Activated CD8-positive, alpha-beta T cell treated with anti-CD3 and anti-CD28 coated beads for 36 hours (primary cell): ENCODE measurements at regions of chr17 and their contacts with region 1.

Region 1: DNA sequence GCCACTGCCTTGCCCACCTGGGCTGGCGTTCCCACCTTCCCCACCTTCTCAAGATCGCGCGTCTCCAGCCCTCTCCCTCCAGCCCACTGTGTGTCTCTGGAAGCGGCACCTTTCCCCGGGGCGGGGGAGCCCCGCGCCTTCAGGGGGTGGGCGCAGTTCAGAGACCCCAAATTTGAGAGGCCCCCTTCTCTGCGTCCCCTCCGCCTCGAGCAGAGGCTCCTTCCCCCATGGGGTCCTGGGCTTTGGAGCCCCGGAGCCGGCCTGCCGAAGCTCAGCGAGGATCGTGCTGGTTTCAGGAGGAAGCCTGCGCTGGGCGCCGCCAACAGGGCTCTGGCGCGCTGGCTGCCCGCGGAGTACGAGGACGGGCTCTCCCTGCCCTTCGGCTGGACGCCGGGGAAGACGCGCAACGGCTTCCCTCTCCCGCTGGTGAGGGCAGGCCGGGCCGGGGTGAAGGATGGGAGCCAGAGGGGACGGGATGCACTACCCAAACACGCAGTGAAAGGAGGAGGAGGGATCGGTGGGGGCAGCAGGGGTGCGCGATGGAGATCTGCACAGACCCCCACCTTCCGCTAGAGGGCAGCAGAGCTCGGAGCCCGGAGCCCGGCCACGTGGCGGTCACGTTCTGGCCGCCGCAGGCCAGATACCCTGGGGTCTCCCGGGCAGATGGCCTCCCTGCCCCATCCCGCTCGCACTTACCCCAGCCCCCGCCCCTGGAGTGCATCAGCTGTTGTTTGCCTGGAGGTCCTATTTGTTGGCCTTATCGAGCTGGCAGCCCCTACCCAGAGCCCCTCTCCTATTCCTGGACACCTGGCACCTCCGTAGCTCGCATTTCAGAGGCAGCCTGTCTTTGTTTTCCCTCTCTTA is 11.1 kb downstream of the LPO start:
- DNase-seq: peak; percentile 77
- ATAC-seq: peak; percentile 95
- H3K4me3 Mint-ChIP-seq: peak overlapping the region; percentile 67
- H3K27ac Mint-ChIP-seq: peak overlapping the region; percentile 16
- H3K4me1 Mint-ChIP-seq: peaks cover 10% of the 10 kb centered on the region
- H3K27me3 Mint-ChIP-seq: peaks cover 7% of the 10 kb centered on the region
- CTCF ChIP-seq: peak; percentile 98

Region 2: GRCh38 chr17:58189436-58190146 is 59.9 kb before region 1 on chr17:
- CTCF ChIA-PET with region 1: no interaction called
- POLR2A ChIA-PET with region 1: no interaction called
- intact Hi-C with region 1: no loop called
- DNase-seq: no peak
- ATAC-seq: no peak
- H3K4me3 Mint-ChIP-seq: no peak overlapping the region
- H3K27ac Mint-ChIP-seq: no peak overlapping the region
- H3K4me1 Mint-ChIP-seq: no peaks in the 10 kb centered on the region
- H3K27me3 Mint-ChIP-seq: peaks cover 6% of the 10 kb centered on the region
- CTCF ChIP-seq: no peak

Region 3: DNA sequence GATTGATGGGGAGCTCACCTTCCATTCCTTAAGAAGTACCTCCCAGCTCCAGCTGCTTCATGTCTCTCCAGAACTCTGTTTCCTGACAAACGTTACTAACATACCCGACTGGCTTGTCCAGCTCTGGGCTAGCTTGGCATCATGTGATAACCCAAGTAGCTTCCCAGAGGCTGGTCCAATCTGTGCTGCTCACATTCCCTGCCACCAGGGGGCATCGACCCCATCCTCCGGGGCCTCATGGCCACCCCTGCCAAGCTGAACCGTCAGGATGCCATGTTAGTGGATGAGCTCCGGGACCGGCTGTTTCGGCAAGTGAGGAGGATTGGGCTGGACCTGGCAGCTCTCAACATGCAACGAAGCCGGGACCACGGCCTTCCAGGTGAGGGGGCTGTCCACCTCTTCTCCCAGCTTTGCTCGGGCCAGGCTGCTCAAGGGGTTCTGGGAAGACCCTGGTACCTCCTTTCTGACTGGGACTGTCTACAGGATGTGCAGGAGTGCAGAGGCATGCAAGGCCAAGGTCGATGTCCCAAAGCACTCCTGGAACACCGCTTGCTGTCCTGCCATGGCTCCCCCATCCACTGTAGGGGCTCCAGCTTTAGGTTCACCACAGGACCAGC is 49.4 kb before region 1 on chr17:
- CTCF ChIA-PET with region 1: interaction called, 33 read pairs
- POLR2A ChIA-PET with region 1: no interaction called
- intact Hi-C with region 1: no loop called
- DNase-seq: peak; percentile 74
- ATAC-seq: peak; percentile 93
- H3K4me3 Mint-ChIP-seq: no peak overlapping the region
- H3K27ac Mint-ChIP-seq: no peak overlapping the region
- H3K4me1 Mint-ChIP-seq: no peaks in the 10 kb centered on the region
- H3K27me3 Mint-ChIP-seq: no peaks in the 10 kb centered on the region
- CTCF ChIP-seq: peak; percentile 58

Region 4: GRCh38 chr17:58210922-58211321 is 38.6 kb before region 1 on chr17:
- CTCF ChIA-PET with region 1: interaction called, 17 read pairs
- POLR2A ChIA-PET with region 1: no interaction called
- intact Hi-C with region 1: no loop called
- DNase-seq: no peak
- ATAC-seq: no peak
- H3K4me3 Mint-ChIP-seq: no peak overlapping the region
- H3K27ac Mint-ChIP-seq: no peak overlapping the region
- H3K4me1 Mint-ChIP-seq: no peaks in the 10 kb centered on the region
- H3K27me3 Mint-ChIP-seq: no peaks in the 10 kb centered on the region
- CTCF ChIP-seq: no peak

Region 5: DNA sequence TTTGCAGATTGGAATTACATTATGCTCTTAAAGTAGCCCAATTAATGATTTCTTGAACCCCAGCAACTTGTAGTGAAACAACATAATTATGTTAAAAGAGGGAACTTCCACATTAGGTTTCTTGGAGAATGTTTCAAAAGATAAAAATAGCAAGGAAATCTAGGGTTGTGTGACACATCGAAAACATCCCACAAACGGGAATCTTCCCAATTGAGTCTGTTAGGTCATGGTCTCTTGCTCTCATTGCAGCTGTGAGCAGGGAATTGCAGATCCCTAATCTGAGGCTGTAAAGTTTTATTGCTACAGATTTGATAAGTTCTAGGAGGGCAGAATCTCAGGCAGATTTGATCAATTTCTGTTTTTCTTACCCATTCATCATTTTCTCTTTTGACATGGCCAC is 17.9 kb before region 1 on chr17:
- CTCF ChIA-PET with region 1: interaction called, 26 read pairs
- POLR2A ChIA-PET with region 1: interaction called, 3 read pairs
- intact Hi-C with region 1: no loop called
- DNase-seq: no peak
- ATAC-seq: no peak
- H3K4me3 Mint-ChIP-seq: no peak overlapping the region
- H3K27ac Mint-ChIP-seq: no peak overlapping the region
- H3K4me1 Mint-ChIP-seq: peaks cover 7% of the 10 kb centered on the region
- H3K27me3 Mint-ChIP-seq: peaks cover 28% of the 10 kb centered on the region
- CTCF ChIP-seq: no peak

Region 6: DNA sequence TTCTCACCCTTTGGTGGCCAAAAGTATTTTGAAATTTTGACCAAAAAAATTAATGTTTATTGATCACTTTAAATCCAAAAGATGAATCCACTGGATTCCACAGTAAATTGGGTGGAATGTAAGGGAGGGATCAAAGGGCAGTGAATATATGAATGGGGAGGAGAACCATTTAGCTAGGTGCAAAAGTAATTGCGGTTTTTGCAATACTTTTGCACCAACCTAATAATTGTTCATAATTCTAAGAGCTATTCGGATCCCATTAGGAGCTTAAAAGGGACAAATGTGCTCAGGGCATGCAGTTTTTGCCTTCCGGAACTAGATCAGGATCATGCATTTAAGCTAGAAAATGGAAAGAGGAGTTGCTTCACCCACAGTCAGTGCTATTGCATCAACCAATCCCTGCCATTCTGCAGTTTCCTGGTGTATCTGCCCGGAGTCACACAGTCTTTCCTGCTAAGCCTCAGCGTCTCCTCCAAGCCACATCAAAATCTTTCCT is 11.3 kb before region 1 on chr17 and contains the start of gene LPO:
- CTCF ChIA-PET with region 1: interaction called, 26 read pairs
- POLR2A ChIA-PET with region 1: interaction called, 3 read pairs
- intact Hi-C with region 1: no loop called
- DNase-seq: no peak
- ATAC-seq: no peak
- H3K4me3 Mint-ChIP-seq: no peak within 1 kb of the TSS
- H3K27ac Mint-ChIP-seq: no peak within 1 kb of the TSS
- H3K4me1 Mint-ChIP-seq: peaks cover 3% of the 10 kb centered on the region
- H3K27me3 Mint-ChIP-seq: peaks cover 40% of the 10 kb centered on the region
- CTCF ChIP-seq: no peak
- total RNA-seq, gene LPO: not detected

Region 7: GRCh38 chr17:58284320-58285067 is 35.0 kb after region 1 on chr17:
- CTCF ChIA-PET with region 1: no interaction called
- POLR2A ChIA-PET with region 1: no interaction called
- intact Hi-C with region 1: no loop called
- DNase-seq: no peak
- ATAC-seq: no peak
- H3K4me3 Mint-ChIP-seq: no peak overlapping the region
- H3K27ac Mint-ChIP-seq: no peak overlapping the region
- H3K4me1 Mint-ChIP-seq: peaks cover 7% of the 10 kb centered on the region
- H3K27me3 Mint-ChIP-seq: peaks cover 11% of the 10 kb centered on the region
- CTCF ChIP-seq: no peak

Region 8: GRCh38 chr17:58303971-58304725 is 54.6 kb after region 1 on chr17:
- CTCF ChIA-PET with region 1: interaction called, 17 read pairs
- POLR2A ChIA-PET with region 1: interaction called, 3 read pairs
- intact Hi-C with region 1: no loop called
- DNase-seq: peak; percentile 66
- ATAC-seq: peak; percentile 99
- H3K4me3 Mint-ChIP-seq: no peak overlapping the region
- H3K27ac Mint-ChIP-seq: no peak overlapping the region
- H3K4me1 Mint-ChIP-seq: peaks cover 2% of the 10 kb centered on the region
- H3K27me3 Mint-ChIP-seq: no peaks in the 10 kb centered on the region
- CTCF ChIP-seq: peak; percentile 89